ENCODE measurements at regions of chr18 and their contacts with region 1.

Region 1: DNA sequence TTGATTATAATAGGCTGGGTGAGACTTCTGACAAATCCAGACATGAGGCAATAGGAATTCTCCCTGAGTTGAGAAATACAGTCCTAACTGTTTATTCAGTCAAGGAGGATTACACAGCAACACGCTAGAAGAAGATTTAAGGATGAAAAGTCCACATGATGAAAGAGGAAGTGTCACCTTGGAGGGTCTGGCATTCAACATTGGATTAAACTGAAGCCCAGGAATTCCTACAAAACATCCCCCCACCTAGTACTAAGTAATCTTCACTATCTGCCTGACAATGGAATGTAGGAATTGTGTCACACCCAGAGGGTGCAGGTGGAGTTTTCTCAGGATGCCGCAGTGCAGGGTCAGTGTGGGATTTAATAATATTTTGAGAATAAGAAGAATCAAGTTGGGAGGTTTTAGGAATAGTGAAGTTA is 142.4 kb downstream of the SOCS6 start:
- DNase-seq: peak; percentile 47
- H3K4me3 ChIP-seq: no peak overlapping the region
- H3K27ac ChIP-seq: peak overlapping the region; percentile 11
- H3K27me3 ChIP-seq: no peaks in the 10 kb centered on the region
- CTCF ChIP-seq: no peak

Region 2: GRCh38 chr18:70107091-70107490 is 324.1 kb before region 1 on chr18:
- CTCF ChIA-PET with region 1: no interaction called
- POLR2A ChIA-PET with region 1: no interaction called
- DNase-seq: no peak
- H3K4me3 ChIP-seq: no peak overlapping the region
- H3K27ac ChIP-seq: no peak overlapping the region
- H3K27me3 ChIP-seq: no peaks in the 10 kb centered on the region
- CTCF ChIP-seq: no peak

Region 3: GRCh38 chr18:70182548-70182947 is 248.7 kb before region 1 on chr18:
- CTCF ChIA-PET with region 1: interaction called, 16 read pairs
- POLR2A ChIA-PET with region 1: no interaction called
- DNase-seq: no peak
- H3K4me3 ChIP-seq: no peak overlapping the region
- H3K27ac ChIP-seq: no peak overlapping the region
- H3K27me3 ChIP-seq: no peaks in the 10 kb centered on the region
- CTCF ChIP-seq: no peak

Region 4: GRCh38 chr18:70205421-70206397 is 225.5 kb before region 1 on chr18 and contains the start of gene RTTN:
- CTCF ChIA-PET with region 1: interaction called, 17 read pairs
- POLR2A ChIA-PET with region 1: no interaction called
- DNase-seq: peak; percentile 85
- H3K4me3 ChIP-seq: peak within 1 kb of the TSS; percentile 84
- H3K27ac ChIP-seq: peak within 1 kb of the TSS; percentile 99
- H3K27me3 ChIP-seq: no peaks in the 10 kb centered on the region
- CTCF ChIP-seq: no peak
- polyA plus RNA-seq, gene RTTN: 4.1 and 4.6 TPM in 2 replicates

Region 5: GRCh38 chr18:70296289-70296688 is 134.9 kb before region 1 on chr18:
- CTCF ChIA-PET with region 1: interaction called, 13 read pairs
- POLR2A ChIA-PET with region 1: no interaction called
- DNase-seq: no peak
- H3K4me3 ChIP-seq: peak overlapping the region; percentile 17; the same call in 1 of the 2 replicates
- H3K27ac ChIP-seq: no peak overlapping the region
- H3K27me3 ChIP-seq: no peaks in the 10 kb centered on the region
- CTCF ChIP-seq: no peak

Region 6: GRCh38 chr18:70314151-70314782 is 116.9 kb before region 1 on chr18:
- CTCF ChIA-PET with region 1: interaction called, 26 read pairs
- POLR2A ChIA-PET with region 1: no interaction called
- DNase-seq: no peak
- H3K4me3 ChIP-seq: no peak overlapping the region
- H3K27ac ChIP-seq: no peak overlapping the region
- H3K27me3 ChIP-seq: no peaks in the 10 kb centered on the region
- CTCF ChIP-seq: no peak

Region 7: DNA sequence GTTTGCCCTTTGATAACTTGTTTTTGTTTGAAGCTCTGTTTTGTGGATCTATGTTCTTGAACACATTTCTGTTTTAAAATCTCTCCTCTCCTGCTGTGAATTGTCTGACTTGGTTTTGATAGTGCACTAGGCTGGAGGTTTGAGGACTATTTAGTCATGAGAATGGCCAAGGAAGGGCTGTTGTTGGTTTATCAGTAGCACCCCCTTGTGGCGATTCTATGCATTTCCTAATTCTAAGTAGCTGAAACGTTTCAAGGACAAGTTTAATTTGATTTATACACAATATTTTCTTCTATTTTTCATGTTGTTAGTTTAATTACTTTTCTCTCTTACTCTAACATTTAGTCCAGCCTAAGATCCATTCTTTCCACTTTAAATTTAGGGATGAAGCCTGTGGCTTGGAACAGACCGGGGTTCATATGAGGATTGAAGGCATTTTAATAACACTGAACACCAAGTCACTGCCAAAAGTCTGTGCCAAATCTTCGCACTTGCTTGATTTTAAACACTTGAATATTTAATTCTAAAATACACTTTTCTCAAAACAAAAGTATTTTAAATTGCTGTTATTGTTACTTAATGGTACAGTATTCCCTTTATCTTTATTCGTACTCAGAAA is 23.6 kb after region 1 on chr18:
- CTCF ChIA-PET with region 1: interaction called, 27 read pairs
- POLR2A ChIA-PET with region 1: no interaction called
- DNase-seq: peak; percentile 53
- H3K4me3 ChIP-seq: no peak overlapping the region
- H3K27ac ChIP-seq: no peak overlapping the region
- H3K27me3 ChIP-seq: peaks cover 3% of the 10 kb centered on the region
- CTCF ChIP-seq: peak; percentile 84

Measured in AG04450 (cell line).